ENCODE measurements at regions of chr17 and their contacts with region 1.

Region 1: DNA sequence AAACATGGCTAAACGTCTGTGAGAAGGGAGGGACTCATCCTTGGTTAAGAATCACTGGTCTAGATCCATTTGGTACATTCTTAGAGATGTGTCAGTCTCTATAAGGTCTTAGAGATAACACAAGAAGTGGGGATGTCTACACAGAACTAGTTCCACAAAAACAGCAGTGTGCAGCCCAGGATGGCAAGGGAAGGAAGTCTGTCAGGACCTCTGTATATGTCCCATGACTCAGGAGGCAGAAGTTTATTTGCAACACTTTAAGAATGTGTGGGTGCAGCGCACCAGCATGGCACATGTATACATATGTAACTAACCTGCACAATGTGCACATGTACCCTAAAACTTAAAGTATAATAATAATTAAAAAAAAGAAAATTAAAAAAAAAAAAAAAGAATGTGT is 548.5 kb upstream of the SOX9 start:
- ATAC-seq: no peak
- H3K4me3 ChIP-seq: no peak overlapping the region
- H3K27ac ChIP-seq: no peak overlapping the region
- H3K4me1 ChIP-seq: no peaks in the 10 kb centered on the region

Region 2: GRCh38 chr17:71432378-71433315 is 139.7 kb before region 1 on chr17:
- in situ Hi-C with region 1: no loop called
- ATAC-seq: no peak
- H3K4me3 ChIP-seq: no peak overlapping the region
- H3K27ac ChIP-seq: no peak overlapping the region
- H3K4me1 ChIP-seq: no peaks in the 10 kb centered on the region

Region 3: DNA sequence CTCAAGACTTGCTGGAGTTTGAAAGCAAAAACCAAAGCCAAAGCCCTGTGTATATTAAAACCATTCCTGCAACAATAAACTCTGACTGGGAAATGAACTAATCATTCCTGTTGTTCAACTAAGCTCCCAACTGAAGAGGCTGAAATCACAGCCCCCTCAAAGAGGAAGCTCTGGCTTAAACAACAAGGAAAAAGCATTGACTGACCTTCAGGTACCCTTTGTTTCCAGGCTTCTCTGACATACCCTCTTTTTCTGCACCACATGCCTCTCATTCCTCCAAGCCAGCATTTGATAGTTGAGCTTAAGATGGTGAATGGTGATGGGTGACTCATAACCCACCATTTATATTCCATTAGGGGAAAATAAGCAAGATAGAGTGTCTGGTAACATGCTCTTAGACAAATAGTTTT is 77.6 kb after region 1 on chr17:
- in situ Hi-C with region 1: loop called in 1 of 9 experiments (anchors 25 kb)
- ATAC-seq: peak in 1 of 8 experiments; percentile 31
- H3K4me3 ChIP-seq: no peak overlapping the region
- H3K27ac ChIP-seq: no peak overlapping the region
- H3K4me1 ChIP-seq: no peaks in the 10 kb centered on the region

Region 4: GRCh38 chr17:72922219-72922618 is 1349.9 kb after region 1 on chr17:
- in situ Hi-C with region 1: no loop called
- ATAC-seq: peak in 3 of 8 experiments; percentile 3 to 28 (median 4)
- H3K4me3 ChIP-seq: no peak overlapping the region
- H3K27ac ChIP-seq: no peak overlapping the region
- H3K4me1 ChIP-seq: peaks cover 3 to 16% of the 10 kb centered on the region in 2 donors

Measured in motor neuron (in vitro differentiated cells).